ENCODE measurements at regions of chr1 and their contacts with region 1.

Region 1: DNA sequence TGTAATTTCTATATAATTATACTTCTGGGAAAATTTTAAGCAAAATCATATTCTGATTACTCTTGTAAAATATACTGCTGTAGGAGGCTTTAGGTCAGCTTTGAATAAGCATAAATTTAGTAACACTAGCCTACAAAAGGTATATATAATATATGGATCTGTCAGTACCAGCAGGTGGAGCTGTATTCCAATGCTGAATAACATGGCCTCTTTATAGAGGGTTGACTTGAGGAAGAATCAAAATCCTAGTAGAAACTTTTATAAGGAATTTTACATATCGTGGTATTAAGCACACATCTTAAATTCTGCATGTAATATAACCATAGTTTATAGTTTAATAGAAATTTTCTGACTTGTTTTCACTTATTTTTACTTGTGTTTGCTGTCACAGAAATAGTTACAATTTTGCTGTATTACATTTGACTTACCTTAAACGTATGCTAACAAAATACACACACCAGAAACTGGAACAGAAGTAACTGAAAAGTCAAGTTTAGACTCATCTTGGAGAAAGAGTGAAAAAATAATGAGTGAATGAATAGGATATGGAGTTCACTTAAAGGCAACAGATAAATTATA is 79.3 kb downstream of the HMCN1 start:
- DNase-seq: peak; percentile 73
- ATAC-seq: peak; percentile 87
- H3K4me3 ChIP-seq: no peak overlapping the region
- H3K27ac ChIP-seq: no peak overlapping the region
- H3K4me1 ChIP-seq: no peaks in the 10 kb centered on the region
- H3K27me3 ChIP-seq: no peaks in the 10 kb centered on the region
- CTCF ChIP-seq: peak; percentile 72
- POLR2A ChIP-seq: no peak
- RAD21 ChIP-seq: peak; percentile 80

Region 2: GRCh38 chr1:185720633-185721272 is 92.7 kb before region 1 on chr1:
- CTCF ChIA-PET with region 1: no interaction called
- POLR2A ChIA-PET with region 1: no interaction called
- dilution Hi-C with region 1: no loop called
- in situ Hi-C with region 1: no loop called
- intact Hi-C with region 1: loop called (anchors 2 kb)
- DNase-seq: peak; percentile 64
- ATAC-seq: peak; percentile 49
- H3K4me3 ChIP-seq: no peak overlapping the region
- H3K27ac ChIP-seq: no peak overlapping the region
- H3K4me1 ChIP-seq: peaks cover 4% of the 10 kb centered on the region
- H3K27me3 ChIP-seq: no peaks in the 10 kb centered on the region
- CTCF ChIP-seq: peak; percentile 57
- POLR2A ChIP-seq: no peak
- RAD21 ChIP-seq: peak; percentile 51

Region 3: DNA sequence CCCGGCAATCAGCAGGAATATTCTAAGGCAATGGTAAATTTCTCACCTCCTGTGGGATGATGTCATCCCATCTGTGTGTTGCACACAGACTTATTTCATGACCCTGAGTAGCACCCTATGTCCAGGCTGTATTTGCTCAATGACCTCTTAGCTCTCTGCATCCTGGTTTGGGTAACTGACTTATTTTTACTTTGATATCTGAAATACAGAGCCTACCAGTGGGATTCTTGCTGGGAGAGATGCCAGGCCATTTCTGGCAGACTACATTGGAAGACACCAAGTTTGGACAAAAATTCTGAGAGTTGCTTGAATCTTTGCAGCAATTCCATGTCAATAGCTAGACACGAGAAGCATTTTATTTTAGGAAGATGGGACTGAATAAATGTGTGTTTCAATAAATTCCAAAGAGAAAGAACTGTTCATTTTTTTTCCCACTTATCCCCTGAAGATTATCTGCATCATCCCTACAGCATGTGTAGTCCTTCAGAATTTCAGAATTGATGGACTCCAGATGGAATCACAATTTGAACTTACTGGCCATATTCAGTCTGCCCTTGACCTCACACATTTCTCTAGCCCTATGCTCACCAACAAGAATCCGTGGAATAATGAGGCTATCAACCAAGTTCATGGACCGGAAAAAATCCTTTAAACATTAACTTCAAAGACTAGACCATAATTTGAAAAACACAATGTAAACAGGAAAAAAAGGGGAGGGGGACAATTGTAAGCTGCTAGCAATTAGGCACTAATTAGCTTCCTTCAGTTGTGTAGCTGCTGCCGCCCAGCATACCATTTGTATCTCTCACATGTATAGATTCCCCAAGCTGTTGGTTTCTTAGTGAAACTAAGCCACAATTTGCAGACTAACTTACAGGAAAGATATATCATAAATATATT is 147.2 kb after region 1 on chr1:
- CTCF ChIA-PET with region 1: no interaction called
- POLR2A ChIA-PET with region 1: no interaction called
- dilution Hi-C with region 1: no loop called
- in situ Hi-C with region 1: no loop called
- intact Hi-C with region 1: loop called (anchors 10 kb)
- DNase-seq: peak; percentile 7
- ATAC-seq: no peak
- H3K4me3 ChIP-seq: no peak overlapping the region
- H3K27ac ChIP-seq: no peak overlapping the region
- H3K4me1 ChIP-seq: peaks cover 6% of the 10 kb centered on the region
- H3K27me3 ChIP-seq: no peaks in the 10 kb centered on the region
- CTCF ChIP-seq: no peak
- POLR2A ChIP-seq: no peak
- RAD21 ChIP-seq: no peak

Region 4: GRCh38 chr1:186155594-186155993 is 342.1 kb after region 1 on chr1:
- CTCF ChIA-PET with region 1: no interaction called
- POLR2A ChIA-PET with region 1: no interaction called
- dilution Hi-C with region 1: no loop called
- in situ Hi-C with region 1: no loop called
- intact Hi-C with region 1: loop called (anchors 5 kb)
- DNase-seq: peak; percentile 80
- ATAC-seq: peak; percentile 86
- H3K4me3 ChIP-seq: no peak overlapping the region
- H3K27ac ChIP-seq: no peak overlapping the region
- H3K4me1 ChIP-seq: peaks cover 4% of the 10 kb centered on the region; the same call in 1 of the 2 replicates
- H3K27me3 ChIP-seq: no peaks in the 10 kb centered on the region
- CTCF ChIP-seq: peak; percentile 74
- POLR2A ChIP-seq: no peak
- RAD21 ChIP-seq: peak; percentile 73